ENCODE measurements at regions of chr5 and their contacts with region 1.

Region 1: GRCh38 chr5:170791325-170791954 is 7.9 kb downstream of the GABRP start:
- DNase-seq: peak; percentile 21 to 30 (median 26)
- ATAC-seq: peak; percentile 69; the same call in 2 of the 3 replicates
- H3K4me3 ChIP-seq: no peak overlapping the region
- H3K27ac ChIP-seq: no peak overlapping the region
- H3K4me1 ChIP-seq: no peaks in the 10 kb centered on the region
- H3K27me3 ChIP-seq: no peaks in the 10 kb centered on the region
- CTCF ChIP-seq: peak; percentile 31 to 47 (median 47); a peak in 5 of 6 replicates
- EP300 ChIP-seq: no peak
- POLR2A ChIP-seq: no peak
- RAD21 ChIP-seq: peak; percentile 49 to 56

Region 2: GRCh38 chr5:170638454-170639220 is 152.8 kb before region 1 on chr5:
- CTCF ChIA-PET with region 1: interaction called, 4 read pairs
- POLR2A ChIA-PET with region 1: interaction called, 3 read pairs
- in situ Hi-C with region 1: no loop called
- intact Hi-C with region 1: loop called (anchors 1 kb)
- DNase-seq: peak; percentile 73 to 88 (median 82)
- ATAC-seq: peak; percentile 96
- H3K4me3 ChIP-seq: no peak overlapping the region
- H3K27ac ChIP-seq: no peak overlapping the region
- H3K4me1 ChIP-seq: peaks cover 3 to 4% of the 10 kb centered on the region in 2 experiments; a peak in 2 of 5 replicates
- H3K27me3 ChIP-seq: peaks cover 0 to 25% of the 10 kb centered on the region in 2 experiments; a peak in 2 of 5 replicates
- CTCF ChIP-seq: peak; percentile 79 to 84 (median 83)
- EP300 ChIP-seq: no peak
- POLR2A ChIP-seq: no peak
- RAD21 ChIP-seq: peak; percentile 60 to 79

Measured in K562 (cell line).